Activated B cell treated with CpG ODN at 0.5 μM for 24 hours (primary cell): ENCODE measurements at regions of chr1 and their contacts with region 1.

Region 1: DNA sequence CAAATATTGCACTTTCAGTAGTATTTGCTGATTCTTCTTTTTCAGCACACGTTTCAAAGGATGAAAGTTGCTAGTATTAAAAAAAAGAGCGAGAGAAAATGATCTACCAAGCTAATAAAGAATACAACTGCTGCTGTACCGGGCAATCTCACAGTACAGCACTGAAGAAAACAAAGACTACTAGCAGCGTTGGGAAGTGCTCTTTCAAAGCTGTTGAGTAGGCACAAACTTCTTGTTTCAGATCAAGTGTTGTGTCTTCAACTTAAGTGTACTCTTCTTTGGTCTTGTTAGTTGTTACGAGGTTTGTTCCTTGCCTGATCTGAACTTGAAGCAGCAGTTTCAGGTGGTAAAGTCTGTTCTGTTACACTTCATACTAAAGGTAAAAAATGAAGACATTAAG is 7.9 kb downstream of the CSDE1 start:
- DNase-seq: no peak
- ATAC-seq: no peak
- H3K4me3 Mint-ChIP-seq: no peak overlapping the region
- H3K27ac Mint-ChIP-seq: no peak overlapping the region
- H3K4me1 Mint-ChIP-seq: peaks cover 73% of the 10 kb centered on the region
- H3K27me3 Mint-ChIP-seq: no peaks in the 10 kb centered on the region
- CTCF ChIP-seq: no peak

Region 2: GRCh38 chr1:114735479-114735878 is 14.4 kb before region 1 on chr1:
- CTCF ChIA-PET with region 1: no interaction called
- POLR2A ChIA-PET with region 1: no interaction called
- intact Hi-C with region 1: loop called (anchors 2 kb)
- DNase-seq: no peak
- ATAC-seq: no peak
- H3K4me3 Mint-ChIP-seq: no peak overlapping the region
- H3K27ac Mint-ChIP-seq: no peak overlapping the region
- H3K4me1 Mint-ChIP-seq: no peaks in the 10 kb centered on the region
- H3K27me3 Mint-ChIP-seq: no peaks in the 10 kb centered on the region
- CTCF ChIP-seq: no peak

Region 3: GRCh38 chr1:115133440-115133839 is 383.6 kb after region 1 on chr1:
- CTCF ChIA-PET with region 1: no interaction called
- POLR2A ChIA-PET with region 1: no interaction called
- intact Hi-C with region 1: no loop called
- DNase-seq: no peak
- ATAC-seq: no peak
- H3K4me3 Mint-ChIP-seq: no peak overlapping the region
- H3K27ac Mint-ChIP-seq: no peak overlapping the region
- H3K4me1 Mint-ChIP-seq: no peaks in the 10 kb centered on the region
- H3K27me3 Mint-ChIP-seq: peaks cover 2% of the 10 kb centered on the region
- CTCF ChIP-seq: no peak